Panc1 (cell line): ENCODE measurements at regions of chr10 and their contacts with region 1.

Region 1: DNA sequence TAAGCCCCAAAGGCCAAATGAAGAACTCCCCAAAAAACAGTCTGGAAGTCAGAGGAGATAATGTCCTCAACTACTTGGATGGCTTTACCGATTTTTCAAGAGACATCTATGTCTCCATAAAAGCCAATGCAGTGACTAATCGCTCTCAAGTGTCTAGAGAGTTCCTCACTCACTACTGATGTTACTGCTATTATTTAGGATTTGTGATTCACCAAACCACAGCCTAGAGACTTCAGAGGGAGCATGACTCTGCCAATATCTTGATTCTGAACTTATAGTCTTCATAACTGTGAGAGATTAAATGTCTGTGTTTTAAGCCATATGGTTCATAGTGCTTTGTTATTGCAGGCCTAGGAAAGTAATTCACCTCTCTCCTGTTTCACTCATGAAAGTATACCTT is 160.2 kb downstream of the IPMK start:
- DNase-seq: no peak
- ATAC-seq: no peak
- H3K4me3 ChIP-seq: no peak overlapping the region
- H3K27ac ChIP-seq: no peak overlapping the region
- H3K4me1 ChIP-seq: no peaks in the 10 kb centered on the region
- H3K27me3 ChIP-seq: no peaks in the 10 kb centered on the region
- CTCF ChIP-seq: no peak

Region 2: GRCh38 chr10:58044072-58044471 is 63.4 kb before region 1 on chr10:
- CTCF ChIA-PET with region 1: no interaction called
- POLR2A ChIA-PET with region 1: no interaction called
- in situ Hi-C with region 1: no loop called
- intact Hi-C with region 1: loop called (anchors 10 kb)
- DNase-seq: no peak
- ATAC-seq: peak; percentile 69
- H3K4me3 ChIP-seq: no peak overlapping the region
- H3K27ac ChIP-seq: no peak overlapping the region
- H3K4me1 ChIP-seq: no peaks in the 10 kb centered on the region
- H3K27me3 ChIP-seq: no peaks in the 10 kb centered on the region
- CTCF ChIP-seq: no peak